GM18951 (cell line): ENCODE measurements at regions of chr6 and their contacts with region 1.

Region 1: GRCh38 chr6:53171605-53172446 is 23.2 kb upstream of the GCM1 start:
- POLR2A ChIP-seq: no peak

Region 2: GRCh38 chr6:53410508-53411258 is 238.9 kb after region 1 on chr6:
- in situ Hi-C with region 1: loop called (anchors 10 kb)
- POLR2A ChIP-seq: no peak

Region 3: GRCh38 chr6:53651764-53652401 is 480.1 kb after region 1 on chr6:
- in situ Hi-C with region 1: loop called (anchors 25 kb)
- POLR2A ChIP-seq: no peak